CD4-positive, alpha-beta memory T cell (primary cell): ENCODE measurements at regions of chrX and their contacts with region 1.

Region 1: GRCh38 chrX:23952984-23953907 is 45.4 kb downstream of the CXorf58 start:
- DNase-seq: peak; percentile 42 to 59 (median 52)
- H3K4me3 ChIP-seq: peak overlapping the region in 1 of 2 donors; percentile 50
- H3K4me3 Mint-ChIP-seq: peak overlapping the region; percentile 72 to 88 (median 85)
- H3K27ac ChIP-seq: peak overlapping the region; percentile 64
- H3K27ac Mint-ChIP-seq: peak overlapping the region; percentile 61 to 93 (median 88)
- H3K4me1 ChIP-seq: peaks cover 20% of the 10 kb centered on the region
- H3K4me1 Mint-ChIP-seq: peaks cover 3 to 34% (median 9%) of the 10 kb centered on the region in 4 donors
- H3K27me3 ChIP-seq: no peaks in the 10 kb centered on the region
- H3K27me3 Mint-ChIP-seq: no peaks in the 10 kb centered on the region

Region 2: GRCh38 chrX:23930894-23931689 is 22.2 kb before region 1 on chrX:
- CTCF ChIA-PET with region 1: no interaction called
- POLR2A ChIA-PET with region 1: interaction called, 3 read pairs
- intact Hi-C with region 1: loop called (anchors 1 kb)
- DNase-seq: peak in 4 of 5 donors; percentile 43 to 66 (median 54)
- H3K4me3 ChIP-seq: no peak overlapping the region
- H3K4me3 Mint-ChIP-seq: peak overlapping the region in 6 of 8 donors; percentile 37 to 70 (median 46)
- H3K27ac ChIP-seq: no peak overlapping the region
- H3K27ac Mint-ChIP-seq: peak overlapping the region; percentile 49 to 88 (median 85)
- H3K4me1 ChIP-seq: peaks cover 22% of the 10 kb centered on the region
- H3K4me1 Mint-ChIP-seq: peaks cover 15 to 21% (median 17%) of the 10 kb centered on the region in 4 donors
- H3K27me3 ChIP-seq: no peaks in the 10 kb centered on the region
- H3K27me3 Mint-ChIP-seq: no peaks in the 10 kb centered on the region

Region 3: DNA sequence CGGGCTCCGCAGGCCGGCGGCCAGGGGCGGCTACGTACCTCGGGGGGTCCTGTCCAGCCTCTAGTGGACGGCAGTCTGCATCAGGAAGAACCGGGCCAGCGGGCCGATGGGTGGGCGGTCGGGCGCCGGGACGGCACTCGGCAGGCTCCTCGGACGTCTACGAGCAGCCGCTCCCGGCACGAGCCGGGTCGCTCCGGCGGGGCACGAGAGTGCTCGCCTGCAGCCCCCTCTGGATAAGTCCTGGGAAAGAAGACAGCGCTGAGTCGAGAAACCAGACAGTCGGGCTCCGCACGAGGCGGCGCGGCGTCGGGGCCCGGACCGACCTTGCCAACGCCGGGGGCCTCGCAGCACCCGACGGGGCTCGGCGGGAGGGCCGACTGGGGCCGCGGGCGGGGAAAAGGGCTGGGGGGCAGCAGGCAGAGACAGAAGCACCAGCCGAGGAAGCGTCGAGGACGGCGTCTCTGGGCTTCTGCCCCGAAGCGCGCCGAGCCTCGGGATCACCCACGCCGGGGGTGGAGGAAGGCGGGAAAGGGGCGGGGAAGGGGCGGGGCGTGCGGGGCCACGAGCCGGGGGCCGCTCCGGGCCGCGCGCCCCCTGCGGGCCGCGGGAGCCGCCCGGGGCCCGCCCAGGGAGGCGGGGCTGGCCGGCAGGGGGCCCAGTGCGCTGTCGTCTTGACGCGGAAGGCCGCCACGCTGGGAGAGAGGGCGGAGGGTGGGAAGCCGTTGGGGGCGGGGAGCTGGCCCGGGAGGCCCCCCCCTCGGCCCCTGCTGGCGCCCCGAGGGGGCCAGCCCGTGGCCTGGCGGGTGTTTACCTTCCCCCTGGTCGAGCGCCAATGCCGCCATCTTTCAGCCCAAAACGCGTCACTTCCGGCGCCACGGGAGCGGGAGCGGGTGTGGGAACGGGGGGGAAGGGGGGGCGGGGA is 71.8 kb after region 1 on chrX:
- CTCF ChIA-PET with region 1: no interaction called
- POLR2A ChIA-PET with region 1: interaction called, 13 read pairs
- intact Hi-C with region 1: loop called (anchors 1 kb)
- DNase-seq: peak; percentile 77 to 82 (median 80)
- H3K4me3 ChIP-seq: peak overlapping the region; percentile 61 to 62
- H3K4me3 Mint-ChIP-seq: peak overlapping the region; percentile 62 to 94 (median 88)
- H3K27ac ChIP-seq: peak overlapping the region; percentile 75
- H3K27ac Mint-ChIP-seq: peak overlapping the region in 5 of 7 donors; percentile 59 to 92 (median 75)
- H3K4me1 ChIP-seq: peaks cover 29% of the 10 kb centered on the region
- H3K4me1 Mint-ChIP-seq: peaks cover 14 to 29% (median 22%) of the 10 kb centered on the region in 4 donors
- H3K27me3 ChIP-seq: no peaks in the 10 kb centered on the region
- H3K27me3 Mint-ChIP-seq: no peaks in the 10 kb centered on the region

Region 4: DNA sequence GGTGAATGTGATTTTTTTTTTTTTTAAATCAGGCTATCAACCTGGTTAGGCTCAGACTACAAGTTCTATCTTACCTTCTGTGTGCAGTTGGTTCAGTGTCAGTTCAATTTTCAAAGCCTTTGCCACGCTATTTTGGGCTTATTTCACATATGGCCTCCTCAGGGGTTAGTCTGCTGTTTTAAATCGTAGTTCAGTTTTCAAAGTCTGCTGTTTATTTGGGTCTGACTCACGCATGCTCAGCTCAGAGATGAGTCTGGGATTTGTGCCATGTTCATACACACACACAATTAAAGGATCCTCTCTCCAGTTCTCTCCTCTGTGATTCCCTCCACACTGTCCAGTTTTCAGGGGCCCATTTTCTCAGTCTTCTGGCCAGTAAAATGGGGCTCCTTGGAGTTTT is 164.0 kb after region 1 on chrX:
- CTCF ChIA-PET with region 1: no interaction called
- POLR2A ChIA-PET with region 1: no interaction called
- intact Hi-C with region 1: no loop called
- DNase-seq: no peak
- H3K4me3 ChIP-seq: no peak overlapping the region
- H3K4me3 Mint-ChIP-seq: no peak overlapping the region
- H3K27ac ChIP-seq: no peak overlapping the region
- H3K27ac Mint-ChIP-seq: no peak overlapping the region
- H3K4me1 ChIP-seq: no peaks in the 10 kb centered on the region
- H3K4me1 Mint-ChIP-seq: no peaks in the 10 kb centered on the region
- H3K27me3 ChIP-seq: no peaks in the 10 kb centered on the region
- H3K27me3 Mint-ChIP-seq: no peaks in the 10 kb centered on the region